A673 (cell line): ENCODE measurements at regions of chr14 and their contacts with region 1.

Region 1: DNA sequence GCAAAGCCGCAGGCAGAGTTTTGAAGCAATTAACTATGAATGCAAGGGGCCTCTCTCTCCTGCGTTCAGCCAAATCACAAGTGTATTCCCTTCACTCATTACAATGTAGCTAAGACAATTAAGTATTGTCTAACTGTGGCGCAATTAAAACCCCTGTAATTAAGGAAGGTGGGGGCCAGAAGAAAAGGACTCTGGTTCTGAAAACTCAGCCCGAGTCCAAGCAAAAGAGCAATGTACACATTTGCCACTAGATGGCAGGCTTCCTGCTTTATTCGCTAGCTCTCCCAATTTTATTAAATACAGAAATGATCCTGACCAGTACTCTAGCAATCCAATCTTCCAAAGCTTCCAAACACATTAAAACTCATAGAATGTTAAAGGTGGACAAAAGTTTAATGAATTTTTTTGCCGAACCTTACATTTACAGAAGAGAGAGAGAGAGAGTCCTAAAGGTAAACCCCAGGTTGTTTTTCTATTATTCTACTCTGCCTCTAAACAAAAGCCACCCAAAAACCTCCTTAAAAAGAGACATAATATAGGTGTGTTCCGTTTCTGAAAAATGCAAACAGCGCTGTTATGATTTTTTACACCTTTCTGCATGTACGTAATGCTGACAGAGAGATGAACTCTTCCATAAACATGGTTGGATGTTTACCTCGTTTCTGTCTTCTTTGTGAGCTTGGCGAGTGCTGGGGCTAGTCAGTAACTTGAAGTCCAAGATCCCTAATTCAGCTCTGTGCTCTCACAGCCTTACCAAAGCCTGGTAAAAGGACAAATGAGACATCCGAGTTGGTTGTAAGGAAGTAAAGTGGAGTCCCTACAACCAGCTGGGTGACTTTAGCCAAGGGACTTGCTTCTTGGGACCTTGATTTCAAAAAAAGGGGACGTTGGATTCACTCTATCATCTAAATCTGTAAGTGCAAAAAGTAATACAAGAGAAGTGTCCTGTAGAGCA is 50.9 kb upstream of the VASH1 start:
- DNase-seq: peak; percentile 66
- H3K4me3 ChIP-seq: no peak overlapping the region
- H3K27ac ChIP-seq: no peak overlapping the region
- H3K4me1 ChIP-seq: no peaks in the 10 kb centered on the region
- H3K27me3 ChIP-seq: no peaks in the 10 kb centered on the region
- CTCF ChIP-seq: peak; percentile 85

Region 2: GRCh38 chr14:76784266-76785264 is 74.2 kb after region 1 on chr14:
- CTCF ChIA-PET with region 1: interaction called, 17 read pairs
- POLR2A ChIA-PET with region 1: no interaction called
- intact Hi-C with region 1: loop called (anchors 2 kb)
- DNase-seq: peak; percentile 90
- H3K4me3 ChIP-seq: no peak overlapping the region
- H3K27ac ChIP-seq: no peak overlapping the region
- H3K4me1 ChIP-seq: no peaks in the 10 kb centered on the region
- H3K27me3 ChIP-seq: no peaks in the 10 kb centered on the region
- CTCF ChIP-seq: peak; percentile 98

Region 3: GRCh38 chr14:77067632-77068514 is 357.5 kb after region 1 on chr14:
- CTCF ChIA-PET with region 1: no interaction called
- POLR2A ChIA-PET with region 1: no interaction called
- intact Hi-C with region 1: loop called (anchors 2 kb)
- DNase-seq: peak; percentile 77
- H3K4me3 ChIP-seq: no peak overlapping the region
- H3K27ac ChIP-seq: no peak overlapping the region
- H3K4me1 ChIP-seq: no peaks in the 10 kb centered on the region
- H3K27me3 ChIP-seq: no peaks in the 10 kb centered on the region
- CTCF ChIP-seq: peak; percentile 98